ENCODE measurements at regions of chr2 and their contacts with region 1.

Region 1: DNA sequence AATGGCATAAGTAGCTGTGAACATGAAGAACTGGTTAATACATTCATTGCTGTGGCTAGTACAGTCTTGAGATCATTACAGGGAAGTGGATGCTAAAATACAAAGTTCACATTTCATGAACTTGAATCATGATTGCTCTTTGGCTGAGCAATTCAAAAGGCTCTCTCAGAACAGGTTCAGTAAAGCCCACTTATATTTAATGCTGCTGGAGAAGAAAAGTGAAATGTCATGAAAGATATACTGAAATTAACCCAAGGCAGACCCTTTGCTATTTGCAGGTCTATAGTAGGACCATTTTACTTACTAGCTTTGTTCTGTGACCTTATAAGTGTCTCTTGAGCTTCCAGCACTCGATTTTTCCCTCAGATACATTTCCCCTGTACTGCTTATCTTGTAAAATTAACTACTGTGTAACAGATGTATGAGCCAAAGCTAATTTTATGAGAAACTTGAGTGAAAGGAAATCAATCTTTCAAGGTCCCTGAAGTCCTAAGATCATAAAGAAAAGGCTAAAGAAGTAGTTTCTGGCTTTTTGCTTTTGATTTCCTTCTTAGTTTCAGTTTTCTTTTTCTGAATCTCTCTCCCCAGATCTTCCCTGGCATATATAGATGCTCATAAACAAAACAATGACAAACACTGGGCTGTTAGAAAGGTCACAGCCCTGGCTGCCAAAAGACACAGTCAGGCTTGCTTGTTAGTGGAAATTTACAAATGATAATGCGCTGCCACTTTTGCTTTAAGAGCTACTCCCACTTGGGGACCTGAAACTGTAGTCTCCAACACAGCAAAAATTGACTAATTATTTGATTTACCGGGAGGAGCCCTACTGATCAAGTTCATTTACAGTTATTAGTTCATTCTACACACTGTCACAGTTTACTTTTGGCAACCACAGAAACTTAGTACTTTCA is 132.7 kb upstream of the XPO1 start:
- DNase-seq: no peak
- ATAC-seq: peak; percentile 88

Region 2: DNA sequence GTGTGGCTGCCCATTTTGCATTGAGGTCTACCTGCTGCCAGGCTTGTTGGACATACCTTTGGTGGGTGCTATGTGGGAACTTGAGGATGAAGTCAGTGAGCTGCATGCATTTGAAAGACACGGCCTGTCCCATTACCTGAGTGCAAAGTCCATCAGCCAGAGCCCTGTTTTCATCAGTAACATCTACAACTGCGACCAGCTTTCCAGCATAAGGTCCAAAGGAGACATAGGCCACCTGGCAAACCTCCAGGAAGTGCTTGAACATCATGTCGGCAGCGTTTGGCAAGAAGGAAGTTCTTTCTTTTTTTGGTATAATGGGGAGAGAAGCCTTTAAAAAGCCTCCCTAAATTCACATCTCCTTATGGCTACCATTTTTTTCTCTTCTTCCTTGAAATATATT is 39.9 kb after region 1 on chr2:
- intact Hi-C with region 1: loop called (anchors 5 kb)
- DNase-seq: no peak
- ATAC-seq: no peak

Region 3: DNA sequence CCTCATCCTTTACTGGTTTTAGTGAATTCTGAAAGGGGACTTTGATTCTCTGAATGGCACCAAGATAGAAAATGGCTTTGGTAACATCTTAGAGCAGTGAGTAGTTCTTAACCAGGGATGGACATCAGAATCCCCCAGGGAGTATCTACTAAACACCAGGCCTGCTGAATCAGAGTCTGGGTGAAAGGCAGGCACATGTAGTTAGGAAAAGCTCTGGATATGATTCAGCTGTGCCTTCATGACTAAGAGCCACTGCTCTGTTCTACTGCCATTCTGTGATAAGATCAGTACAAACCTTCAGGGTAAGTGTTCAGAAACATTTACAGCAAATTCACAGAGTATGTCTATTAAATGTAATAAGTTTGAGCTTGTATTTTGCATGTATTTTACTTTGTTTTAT is 478.9 kb after region 1 on chr2:
- intact Hi-C with region 1: no loop called
- DNase-seq: no peak
- ATAC-seq: peak; percentile 27

Measured in Right ventricle myocardium inferior (tissue), 1 donor.